ENCODE measurements at regions of chr19 and their contacts with region 1.

Region 1: GRCh38 chr19:55339048-55339888 is at the start of gene KMT5C:
- DNase-seq: peak; percentile 100
- ATAC-seq: peak; percentile 93
- H3K4me3 ChIP-seq: peak within 1 kb of the TSS; percentile 85
- H3K27ac ChIP-seq: peak within 1 kb of the TSS; percentile 84
- H3K4me1 ChIP-seq: peaks cover 10% of the 10 kb centered on the region
- H3K27me3 ChIP-seq: no peaks in the 10 kb centered on the region; a peak in 1 of 4 replicates
- CTCF ChIP-seq: peak; percentile 11 to 19 (median 14); a peak in 3 of 6 replicates
- EP300 ChIP-seq: no peak
- POLR2A ChIP-seq: 0 out of 2 replicates have a peak, but pooled peaks have one; percentile 13
- RAD21 ChIP-seq: no peak
- polyA plus RNA-seq, gene KMT5C: 0.20 TPM in 1 of 2 experiments, not detected in the other

Region 2: DNA sequence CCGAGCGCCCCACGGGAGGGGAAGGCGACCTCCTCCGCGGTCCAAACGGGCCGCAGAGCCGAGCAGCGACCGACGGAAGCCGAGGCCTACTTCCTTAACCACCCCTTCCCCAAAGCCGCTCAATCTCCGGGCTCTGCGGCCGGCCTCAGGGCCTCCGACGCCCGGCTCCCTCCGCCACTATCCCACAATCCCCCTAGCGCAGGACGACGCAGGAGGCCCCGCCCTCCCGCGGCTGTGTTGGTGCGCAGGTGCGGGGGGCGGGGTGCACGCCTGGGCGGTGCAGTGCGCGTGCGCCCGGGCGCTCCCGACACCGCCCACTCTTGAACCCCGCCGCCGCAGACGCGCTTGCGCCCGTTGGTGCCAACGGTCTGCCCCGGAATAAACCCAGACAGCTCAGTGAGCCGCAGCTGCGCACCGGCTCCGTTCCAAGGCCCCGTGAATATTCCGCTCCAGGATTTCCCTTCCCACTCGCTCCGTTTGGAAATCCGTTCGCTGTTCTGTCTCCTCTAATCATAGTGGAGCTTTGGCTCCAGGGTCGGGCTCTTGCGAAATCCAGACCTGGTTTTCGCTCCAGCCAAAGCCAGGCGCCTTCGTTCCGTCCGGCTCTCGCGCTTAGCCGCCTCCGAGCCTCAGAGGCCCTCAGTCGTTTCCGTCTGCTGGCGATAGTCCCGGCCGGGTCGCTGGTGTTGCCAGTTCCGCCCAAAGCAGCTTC is 80.3 kb before region 1 on chr19 and contains the start of gene PPP6R1:
- CTCF ChIA-PET with region 1: interaction called, 4 read pairs
- POLR2A ChIA-PET with region 1: interaction called, 27 read pairs
- RAD21 ChIA-PET with region 1: interaction called, 20 read pairs
- SMC1A ChIA-PET with region 1: interaction called, 7 read pairs
- in situ Hi-C with region 1: no loop called
- intact Hi-C with region 1: no loop called
- DNase-seq: peak; percentile 97
- ATAC-seq: peak; percentile 85
- H3K4me3 ChIP-seq: peak within 1 kb of the TSS; percentile 100
- H3K27ac ChIP-seq: peak within 1 kb of the TSS; percentile 96
- H3K4me1 ChIP-seq: peaks cover 7% of the 10 kb centered on the region
- H3K27me3 ChIP-seq: no peaks in the 10 kb centered on the region
- CTCF ChIP-seq: no peak
- EP300 ChIP-seq: 0 out of 4 replicates have a peak, but pooled peaks have one; percentile 5 to 30
- POLR2A ChIP-seq: peak; percentile 89
- RAD21 ChIP-seq: no peak
- polyA plus RNA-seq, gene PPP6R1: 0.80 to 2.5 TPM

Region 3: DNA sequence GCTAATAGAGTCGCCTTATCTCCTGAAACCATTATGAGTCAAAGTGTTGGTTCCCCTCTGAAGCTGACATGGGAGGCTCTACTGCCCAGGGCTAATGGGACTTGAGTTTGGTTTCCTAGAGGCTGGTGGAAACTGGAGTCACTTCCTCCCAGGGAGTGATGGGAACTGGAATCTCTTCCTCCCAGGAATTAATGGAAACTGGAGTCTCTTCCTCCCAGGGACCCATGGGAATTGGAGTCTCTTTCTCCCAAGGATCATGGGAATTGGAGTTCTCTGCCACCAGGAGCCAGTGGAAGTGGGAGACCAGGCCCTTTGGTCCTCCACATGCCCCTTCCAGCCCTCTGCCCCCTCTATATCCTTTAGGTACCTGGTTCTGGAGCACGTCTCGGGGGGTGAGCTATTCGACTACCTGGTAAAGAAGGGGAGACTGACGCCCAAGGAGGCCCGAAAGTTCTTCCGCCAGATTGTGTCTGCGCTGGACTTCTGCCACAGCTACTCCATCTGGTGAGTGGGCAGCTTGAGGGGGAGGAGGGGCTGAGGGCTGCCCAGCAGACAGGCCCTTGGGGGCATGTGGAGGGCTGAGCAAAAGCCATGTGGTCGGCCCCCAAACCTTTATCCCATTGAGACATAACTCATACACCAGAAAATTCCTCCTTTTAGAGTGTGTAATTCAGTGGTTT is 50.0 kb before region 1 on chr19:
- CTCF ChIA-PET with region 1: interaction called, 13 read pairs
- POLR2A ChIA-PET with region 1: no interaction called
- RAD21 ChIA-PET with region 1: interaction called, 5 read pairs
- SMC1A ChIA-PET with region 1: no interaction called
- in situ Hi-C with region 1: no loop called
- intact Hi-C with region 1: no loop called
- DNase-seq: no peak
- ATAC-seq: no peak
- H3K4me3 ChIP-seq: no peak overlapping the region
- H3K27ac ChIP-seq: no peak overlapping the region
- H3K4me1 ChIP-seq: no peaks in the 10 kb centered on the region
- H3K27me3 ChIP-seq: no peaks in the 10 kb centered on the region
- CTCF ChIP-seq: no peak
- EP300 ChIP-seq: no peak
- POLR2A ChIP-seq: no peak
- RAD21 ChIP-seq: no peak

Region 4: GRCh38 chr19:55385740-55386529 is 46.7 kb after region 1 on chr19 and contains the start of gene RPL28:
- CTCF ChIA-PET with region 1: interaction called, 12 read pairs
- POLR2A ChIA-PET with region 1: interaction called, 26 read pairs
- RAD21 ChIA-PET with region 1: interaction called, 17 read pairs
- SMC1A ChIA-PET with region 1: interaction called, 15 read pairs
- in situ Hi-C with region 1: no loop called
- intact Hi-C with region 1: no loop called
- DNase-seq: peak; percentile 93
- ATAC-seq: peak; percentile 80
- H3K4me3 ChIP-seq: peak within 1 kb of the TSS; percentile 94
- H3K27ac ChIP-seq: peak within 1 kb of the TSS; percentile 90
- H3K4me1 ChIP-seq: peaks cover 28% of the 10 kb centered on the region
- H3K27me3 ChIP-seq: no peaks in the 10 kb centered on the region
- CTCF ChIP-seq: no peak
- EP300 ChIP-seq: no peak
- POLR2A ChIP-seq: peak; percentile 100
- RAD21 ChIP-seq: no peak
- polyA plus RNA-seq, gene RPL28: 290 to 479 TPM

Region 5: DNA sequence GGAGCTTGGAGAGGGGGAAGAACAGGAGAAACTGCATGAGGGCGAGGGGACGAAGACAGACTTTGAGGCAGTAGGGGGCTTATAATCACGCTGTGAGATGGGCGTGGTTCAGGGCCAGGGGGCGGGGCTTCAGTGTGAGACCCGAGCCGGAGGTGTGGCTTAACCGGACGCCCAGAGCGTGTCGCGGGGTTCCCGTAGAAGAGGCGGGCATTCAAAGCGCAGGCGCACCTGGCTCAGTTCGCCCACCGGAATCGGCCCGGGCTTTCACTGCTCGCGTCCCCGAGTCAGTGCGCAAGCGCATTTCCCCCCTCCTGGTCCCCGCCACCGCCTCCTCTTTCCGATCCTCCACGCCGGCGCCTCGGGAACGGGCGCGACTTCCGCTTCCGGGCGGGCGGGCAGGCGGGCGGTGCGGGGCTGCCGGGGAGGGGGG is 266.0 kb after region 1 on chr19:
- CTCF ChIA-PET with region 1: interaction called, 3 read pairs
- POLR2A ChIA-PET with region 1: no interaction called
- RAD21 ChIA-PET with region 1: no interaction called
- SMC1A ChIA-PET with region 1: no interaction called
- in situ Hi-C with region 1: no loop called
- intact Hi-C with region 1: loop called (anchors 1 kb)
- DNase-seq: peak; percentile 94
- ATAC-seq: peak; percentile 86
- H3K4me3 ChIP-seq: peak overlapping the region; percentile 69; the same call in 1 of the 2 replicates
- H3K27ac ChIP-seq: peak overlapping the region; percentile 90
- H3K4me1 ChIP-seq: peaks cover 10% of the 10 kb centered on the region; the same call in 1 of the 2 replicates
- H3K27me3 ChIP-seq: no peaks in the 10 kb centered on the region
- CTCF ChIP-seq: no peak
- EP300 ChIP-seq: no peak
- POLR2A ChIP-seq: no peak
- RAD21 ChIP-seq: no peak